Left lung (tissue), 14 donors: ENCODE measurements at regions of chr3 and their contacts with region 1.

Region 1: GRCh38 chr3:172965256-172965655 is 175.8 kb downstream of the SPATA16 start:
- DNase-seq: no peak
- ATAC-seq: no peak
- H3K4me3 ChIP-seq: no peak overlapping the region
- H3K27ac ChIP-seq: no peak overlapping the region
- H3K4me1 ChIP-seq: no peaks in the 10 kb centered on the region
- H3K27me3 ChIP-seq: no peaks in the 10 kb centered on the region
- CTCF ChIP-seq: no peak

Region 2: GRCh38 chr3:173111321-173111720 is 146.1 kb after region 1 on chr3:
- intact Hi-C with region 1: loop called in 1 of 2 experiments (anchors 5 kb)
- DNase-seq: no peak
- ATAC-seq: no peak
- H3K4me3 ChIP-seq: no peak overlapping the region
- H3K27ac ChIP-seq: no peak overlapping the region
- H3K4me1 ChIP-seq: no peaks in the 10 kb centered on the region
- H3K27me3 ChIP-seq: no peaks in the 10 kb centered on the region
- CTCF ChIP-seq: no peak